MCF 10A (cell line): ENCODE measurements at regions of chr3 and their contacts with region 1.

Region 1: DNA sequence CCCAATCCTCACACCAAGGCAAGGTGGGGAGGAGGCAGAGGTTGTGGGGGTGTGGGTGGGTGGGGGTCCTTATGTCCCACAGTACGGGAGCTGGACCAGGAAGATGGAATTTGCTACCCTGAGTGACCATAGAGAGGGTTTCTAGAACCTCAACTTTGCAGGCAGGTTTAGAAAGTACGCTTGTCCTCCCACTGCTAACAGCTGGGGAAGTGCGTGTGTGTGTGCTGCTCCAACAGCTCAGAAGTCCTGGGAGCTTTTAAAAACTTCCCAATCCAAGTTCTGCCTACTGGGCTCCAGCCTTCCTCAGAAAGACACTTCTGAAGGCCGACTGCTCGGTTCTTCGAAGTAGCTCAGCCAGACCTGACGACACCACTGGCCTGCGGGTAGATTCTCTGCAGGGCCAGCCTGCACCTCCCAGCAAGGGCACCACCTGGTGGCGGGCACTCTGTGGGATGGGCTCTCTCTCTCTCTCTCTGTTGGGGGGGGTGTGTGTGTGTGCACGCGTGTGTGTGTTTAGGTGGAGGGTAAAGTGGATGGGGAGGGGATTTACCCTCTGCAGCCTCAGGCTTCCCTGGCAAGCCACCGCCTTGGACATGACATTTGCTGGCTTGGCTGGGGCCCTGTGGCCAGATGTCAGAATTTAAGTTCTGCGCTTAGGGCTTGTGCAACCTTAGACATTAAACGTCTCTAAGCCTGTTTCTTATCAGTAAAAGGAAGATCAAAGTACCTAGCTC is 15.6 kb downstream of the TMEM158 start:
- DNase-seq: peak; percentile 79
- H3K4me3 Mint-ChIP-seq: no peak overlapping the region
- H3K27ac Mint-ChIP-seq: no peak overlapping the region
- H3K4me1 Mint-ChIP-seq: peaks cover 14% of the 10 kb centered on the region
- H3K27me3 Mint-ChIP-seq: no peaks in the 10 kb centered on the region
- CTCF ChIP-seq: peak; percentile 91

Region 2: DNA sequence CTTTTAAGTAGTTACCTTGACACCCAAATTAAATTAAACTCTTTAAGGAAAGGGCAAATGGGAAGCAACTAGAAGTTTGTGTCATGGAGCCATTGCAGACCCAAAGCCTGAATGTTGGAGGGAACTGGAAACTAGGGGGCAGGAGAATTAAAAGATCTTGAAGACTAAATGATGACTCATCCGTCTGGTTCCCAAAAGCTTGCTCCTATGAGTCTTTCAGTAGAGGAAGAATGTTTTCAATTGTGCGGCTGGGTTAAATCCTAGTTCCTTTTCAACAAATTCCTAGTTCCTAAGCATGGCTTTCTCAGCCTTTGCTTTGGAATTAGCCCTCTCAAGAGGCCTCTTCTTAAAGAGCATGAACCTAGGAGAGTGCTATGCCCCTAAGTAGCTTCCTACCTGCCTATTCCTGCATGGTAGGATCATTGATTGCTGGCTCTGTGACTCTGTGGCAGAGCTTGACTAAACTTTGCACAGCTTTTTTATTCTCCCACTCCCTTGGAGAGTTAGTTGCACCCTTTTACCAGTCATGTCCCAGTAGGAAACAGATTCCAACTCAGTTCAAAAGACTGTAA is 166.7 kb before region 1 on chr3:
- CTCF ChIA-PET with region 1: interaction called, 368 read pairs
- POLR2A ChIA-PET with region 1: interaction called, 23 read pairs
- intact Hi-C with region 1: loop called (anchors 1 kb)
- DNase-seq: peak; percentile 78
- H3K4me3 Mint-ChIP-seq: no peak overlapping the region
- H3K27ac Mint-ChIP-seq: no peak overlapping the region
- H3K4me1 Mint-ChIP-seq: peaks cover 9% of the 10 kb centered on the region
- H3K27me3 Mint-ChIP-seq: no peaks in the 10 kb centered on the region
- CTCF ChIP-seq: no peak

Region 3: DNA sequence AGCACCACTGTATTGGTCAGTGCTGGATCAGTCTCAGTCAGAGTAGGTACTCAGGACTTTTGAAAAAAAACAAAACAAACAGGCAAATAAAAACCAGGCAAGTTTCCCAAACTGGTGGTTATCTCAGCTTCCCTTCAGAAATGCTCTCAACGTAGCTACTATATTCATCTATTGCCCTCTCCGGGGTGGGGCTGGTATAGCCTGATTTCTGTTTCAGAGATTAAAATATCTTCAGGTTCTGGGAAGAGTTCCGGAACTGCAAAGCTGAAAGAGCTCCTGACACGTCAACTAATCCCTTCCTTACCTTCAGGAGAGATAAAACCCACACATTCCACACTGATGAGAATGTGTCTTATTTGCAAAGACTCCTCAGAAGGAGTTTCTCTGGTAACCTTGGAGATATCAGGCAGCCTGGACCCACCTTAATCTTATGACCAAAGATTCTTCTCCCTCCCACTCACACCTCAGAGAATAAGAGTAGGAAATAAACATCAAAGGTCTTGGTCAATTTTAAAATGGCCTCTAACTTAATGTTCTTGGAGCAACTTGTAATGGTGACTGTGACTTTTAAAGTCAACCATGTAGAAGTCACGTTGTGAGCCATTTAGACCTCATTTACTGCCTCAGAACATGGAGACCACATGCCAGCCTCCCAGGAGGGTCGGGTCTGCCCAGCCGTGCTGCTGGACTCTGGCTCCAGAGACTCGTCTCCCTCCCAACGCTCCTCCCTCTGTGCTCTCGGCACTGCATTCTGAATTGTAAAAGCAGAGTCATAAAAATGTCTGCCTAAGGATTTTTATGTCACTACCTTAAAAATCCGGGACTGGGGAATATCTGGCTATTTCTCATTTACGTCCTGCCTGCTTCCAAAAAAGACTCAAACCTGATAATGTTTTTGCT is 118.1 kb before region 1 on chr3:
- CTCF ChIA-PET with region 1: interaction called, 12 read pairs
- POLR2A ChIA-PET with region 1: interaction called, 3 read pairs
- intact Hi-C with region 1: loop called (anchors 5 kb)
- DNase-seq: peak; percentile 71
- H3K4me3 Mint-ChIP-seq: no peak overlapping the region
- H3K27ac Mint-ChIP-seq: peak overlapping the region; percentile 87
- H3K4me1 Mint-ChIP-seq: peaks cover 18% of the 10 kb centered on the region
- H3K27me3 Mint-ChIP-seq: no peaks in the 10 kb centered on the region
- CTCF ChIP-seq: no peak

Region 4: DNA sequence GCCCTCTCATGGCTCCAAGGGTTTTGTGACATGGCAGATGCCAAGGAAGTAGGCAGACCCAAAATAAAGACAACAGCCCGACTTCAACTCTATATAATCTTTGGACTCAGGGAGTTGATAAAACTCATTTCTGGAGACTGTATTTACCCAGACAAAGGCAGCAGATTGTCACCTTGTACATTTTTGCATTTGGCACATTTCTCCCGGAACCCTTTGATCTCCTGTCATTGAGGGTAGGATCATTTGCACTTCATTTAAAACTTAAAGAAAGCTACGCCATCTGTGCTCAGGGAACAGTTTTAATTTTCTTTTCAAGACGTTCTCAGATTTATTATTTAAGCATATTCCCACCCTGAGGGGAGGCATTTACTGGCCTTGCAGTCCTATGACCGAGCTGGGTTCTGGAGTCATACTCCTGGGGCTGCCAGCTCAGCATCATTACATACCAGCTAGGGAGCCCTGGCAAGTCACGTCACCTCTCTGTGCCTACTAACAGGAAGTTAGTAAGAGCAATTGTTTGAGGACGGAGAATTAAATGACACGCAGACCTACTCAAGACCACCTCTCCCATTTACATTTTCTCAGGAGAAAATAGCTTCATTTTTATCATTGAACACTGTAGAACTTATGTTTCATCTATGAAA is 70.2 kb before region 1 on chr3:
- CTCF ChIA-PET with region 1: interaction called, 38 read pairs
- POLR2A ChIA-PET with region 1: interaction called, 14 read pairs
- intact Hi-C with region 1: loop called (anchors 5 kb)
- DNase-seq: peak; percentile 62
- H3K4me3 Mint-ChIP-seq: no peak overlapping the region
- H3K27ac Mint-ChIP-seq: peak overlapping the region; percentile 77
- H3K4me1 Mint-ChIP-seq: peaks cover 68% of the 10 kb centered on the region
- H3K27me3 Mint-ChIP-seq: no peaks in the 10 kb centered on the region
- CTCF ChIP-seq: no peak

Region 5: DNA sequence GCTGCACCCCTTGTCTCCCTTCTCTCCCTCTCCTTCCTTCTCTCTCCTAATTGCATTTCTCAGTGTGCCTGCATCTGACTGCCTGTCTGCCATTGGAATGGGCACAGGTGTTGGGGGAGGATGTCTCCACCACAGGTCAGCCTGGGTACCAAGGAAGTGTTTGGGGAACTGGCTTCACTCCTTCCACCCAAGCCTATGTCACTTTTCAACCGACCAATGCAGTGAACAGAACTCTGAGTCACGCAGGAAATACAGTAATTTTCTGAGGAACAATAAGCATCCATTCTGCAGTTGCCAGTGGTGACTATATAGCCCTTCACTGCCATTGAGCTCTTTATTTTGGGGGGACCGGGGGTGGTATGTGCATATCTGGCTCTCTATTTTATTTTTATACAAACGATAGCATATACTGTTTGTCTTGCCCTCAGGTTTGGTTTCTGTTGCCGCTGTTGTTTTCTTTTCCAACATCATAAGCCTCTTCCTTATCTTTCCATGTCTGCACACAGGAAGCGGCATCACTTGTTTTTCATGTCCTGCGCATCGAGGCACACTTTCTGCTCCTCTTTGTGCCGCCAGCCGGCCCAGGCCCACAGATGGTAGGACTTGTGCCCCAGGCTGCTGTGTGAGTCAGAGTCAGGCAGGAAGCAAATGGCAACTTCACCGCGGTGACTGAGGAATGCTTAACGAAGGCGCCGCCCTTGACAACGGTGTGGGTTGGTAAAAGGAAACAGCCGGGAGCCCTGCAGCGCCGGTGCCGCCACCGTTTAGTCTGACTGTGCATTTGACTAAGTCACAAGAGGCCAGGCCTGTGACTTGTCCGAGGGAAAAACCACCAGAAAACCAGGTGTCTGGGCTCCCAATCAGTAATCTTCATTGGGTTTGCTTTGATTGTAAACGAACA is 43.2 kb before region 1 on chr3:
- CTCF ChIA-PET with region 1: interaction called, 9 read pairs
- POLR2A ChIA-PET with region 1: no interaction called
- intact Hi-C with region 1: loop called (anchors 1 kb)
- DNase-seq: peak; percentile 97
- H3K4me3 Mint-ChIP-seq: peak overlapping the region; percentile 24
- H3K27ac Mint-ChIP-seq: peak overlapping the region; percentile 94
- H3K4me1 Mint-ChIP-seq: peaks cover 30% of the 10 kb centered on the region
- H3K27me3 Mint-ChIP-seq: no peaks in the 10 kb centered on the region
- CTCF ChIP-seq: no peak

Region 6: GRCh38 chr3:45199837-45200648 is 10.4 kb before region 1 on chr3:
- CTCF ChIA-PET with region 1: interaction called, 14 read pairs
- POLR2A ChIA-PET with region 1: interaction called, 4 read pairs
- intact Hi-C with region 1: no loop called
- DNase-seq: peak; percentile 94
- H3K4me3 Mint-ChIP-seq: no peak overlapping the region
- H3K27ac Mint-ChIP-seq: peak overlapping the region; percentile 63
- H3K4me1 Mint-ChIP-seq: peaks cover 22% of the 10 kb centered on the region
- H3K27me3 Mint-ChIP-seq: no peaks in the 10 kb centered on the region
- CTCF ChIP-seq: no peak

Region 7: DNA sequence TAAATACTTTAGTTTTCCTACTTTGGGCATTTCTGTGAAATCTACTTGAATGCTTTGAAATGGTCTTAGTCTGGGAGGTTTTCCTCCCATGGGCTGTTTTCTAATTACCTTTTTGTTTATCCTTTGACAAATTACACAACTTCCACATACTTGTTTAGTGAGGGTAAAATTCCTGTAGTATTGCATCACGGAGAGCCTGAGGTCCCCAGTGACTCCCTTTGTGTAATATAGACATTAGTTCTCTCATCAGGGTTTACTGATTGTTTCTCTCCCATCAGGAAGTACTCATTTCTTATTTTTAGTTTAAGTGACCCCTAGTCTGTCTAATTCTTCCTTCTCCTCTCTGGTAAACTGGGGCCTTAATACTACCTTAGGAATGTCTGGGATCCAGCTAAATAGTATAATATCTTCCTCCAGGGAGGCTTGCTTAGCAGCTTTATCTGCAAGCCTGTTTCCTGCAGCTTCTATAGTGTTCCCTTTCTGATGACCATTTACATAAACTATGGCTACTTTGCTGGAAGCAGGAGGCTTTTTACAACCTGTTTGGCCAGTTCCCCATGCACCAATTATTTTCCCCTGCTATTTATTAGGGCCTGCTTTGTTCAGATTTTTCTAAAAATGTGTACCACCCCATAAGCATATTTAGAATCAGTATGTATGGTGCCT is 904.0 kb after region 1 on chr3:
- CTCF ChIA-PET with region 1: no interaction called
- POLR2A ChIA-PET with region 1: no interaction called
- intact Hi-C with region 1: no loop called
- DNase-seq: peak; percentile 82
- H3K4me3 Mint-ChIP-seq: no peak overlapping the region
- H3K27ac Mint-ChIP-seq: peak overlapping the region; percentile 80
- H3K4me1 Mint-ChIP-seq: peaks cover 41% of the 10 kb centered on the region
- H3K27me3 Mint-ChIP-seq: no peaks in the 10 kb centered on the region
- CTCF ChIP-seq: no peak